ENCODE measurements at regions of chrX and their contacts with region 1.

Region 1: GRCh38 chrX:54639346-54640102 is 109.5 kb downstream of the GNL3L start:
- DNase-seq: peak; percentile 79 to 96 (median 90)

Region 2: DNA sequence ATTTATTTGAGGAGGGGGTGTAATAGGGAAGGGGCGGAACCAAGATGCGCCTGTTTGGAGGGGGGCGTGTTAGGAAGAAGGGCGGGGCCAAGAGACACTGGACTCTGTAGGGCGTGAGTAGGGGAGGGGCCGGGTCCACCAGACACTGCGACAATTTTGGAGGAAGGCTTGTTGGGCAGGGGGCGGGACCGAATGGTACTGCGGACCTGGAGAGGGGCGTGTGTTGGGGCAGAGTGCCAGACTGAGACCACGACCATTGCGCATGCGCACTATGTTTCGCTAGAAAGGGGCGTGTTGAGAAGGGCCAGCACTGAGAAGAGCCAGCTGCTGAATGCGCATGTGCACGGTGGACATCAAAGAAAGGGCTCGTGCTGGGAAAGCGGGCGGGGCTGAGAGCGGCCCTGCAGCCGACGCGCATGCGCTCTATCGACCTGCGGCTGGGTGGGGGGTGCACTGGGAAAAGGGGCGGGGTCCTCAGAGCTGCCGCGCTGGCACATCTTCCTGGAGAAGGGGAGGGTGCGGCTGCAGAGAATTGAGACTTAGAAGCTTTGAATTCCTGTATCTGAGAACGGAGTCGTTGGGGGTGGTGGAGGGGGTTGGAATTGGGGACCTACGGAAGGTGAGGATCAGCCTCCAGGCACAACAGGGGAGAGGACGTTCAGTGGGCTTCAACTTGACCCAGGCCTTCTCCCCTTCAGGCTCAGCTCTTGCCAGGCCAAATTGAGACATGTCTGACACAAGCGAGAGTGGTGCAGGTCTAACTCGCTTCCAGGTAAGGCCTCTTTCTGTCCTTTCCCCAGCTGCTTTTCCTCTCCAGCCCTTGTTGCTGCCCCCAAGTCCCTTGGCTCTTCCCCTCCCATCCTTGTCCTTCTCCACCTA is 169.3 kb after region 1 on chrX:
- intact Hi-C with region 1: loop called (anchors 5 kb)
- DNase-seq: peak; percentile 80 to 95 (median 88)